ENCODE measurements at regions of chr10 and their contacts with region 1.

Region 1: GRCh38 chr10:34994565-34995142 is 95.5 kb downstream of the CUL2 start:
- DNase-seq: peak; percentile 61
- H3K4me3 Mint-ChIP-seq: no peak overlapping the region
- H3K27ac Mint-ChIP-seq: peak overlapping the region; percentile 73
- H3K4me1 Mint-ChIP-seq: peaks cover 21% of the 10 kb centered on the region
- H3K27me3 Mint-ChIP-seq: no peaks in the 10 kb centered on the region

Region 2: DNA sequence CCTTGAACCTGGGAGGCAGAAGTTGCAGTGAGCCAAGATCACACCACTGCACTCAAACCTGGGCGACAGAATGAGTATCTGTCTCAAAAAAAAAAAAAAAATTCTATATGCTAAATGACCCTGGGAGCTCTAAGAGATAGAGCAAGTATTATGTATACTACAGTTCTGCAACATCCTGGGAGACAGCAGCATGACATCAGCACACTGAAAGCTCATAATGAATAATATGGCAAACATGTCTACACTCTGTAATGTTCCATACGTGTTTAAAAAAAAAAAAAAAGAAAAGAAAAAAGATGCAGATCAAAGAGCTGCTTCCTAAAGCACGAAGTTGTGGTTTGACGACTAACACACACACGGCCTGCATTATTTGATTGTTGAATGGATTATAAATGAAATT is 23.0 kb after region 1 on chr10:
- intact Hi-C with region 1: loop called (anchors 1 kb)
- DNase-seq: no peak
- H3K4me3 Mint-ChIP-seq: no peak overlapping the region
- H3K27ac Mint-ChIP-seq: peak overlapping the region; percentile 1
- H3K4me1 Mint-ChIP-seq: peaks cover 9% of the 10 kb centered on the region
- H3K27me3 Mint-ChIP-seq: no peaks in the 10 kb centered on the region

Region 3: GRCh38 chr10:35027567-35027966 is 32.9 kb after region 1 on chr10:
- intact Hi-C with region 1: loop called (anchors 1 kb)
- DNase-seq: no peak
- H3K4me3 Mint-ChIP-seq: no peak overlapping the region
- H3K27ac Mint-ChIP-seq: no peak overlapping the region
- H3K4me1 Mint-ChIP-seq: no peaks in the 10 kb centered on the region
- H3K27me3 Mint-ChIP-seq: no peaks in the 10 kb centered on the region

Region 4: GRCh38 chr10:35090162-35090954 is 95.7 kb after region 1 on chr10 and contains the start of gene CUL2:
- intact Hi-C with region 1: loop called (anchors 1 kb)
- DNase-seq: peak; percentile 90
- H3K4me3 Mint-ChIP-seq: peak within 1 kb of the TSS; percentile 98
- H3K27ac Mint-ChIP-seq: peak within 1 kb of the TSS; percentile 99
- H3K4me1 Mint-ChIP-seq: peaks cover 38% of the 10 kb centered on the region
- H3K27me3 Mint-ChIP-seq: peaks cover 9% of the 10 kb centered on the region
- total RNA-seq, gene CUL2: 49.8 and 50.5 TPM in 2 replicates

Region 5: GRCh38 chr10:35218339-35218955 is 223.8 kb after region 1 on chr10:
- intact Hi-C with region 1: loop called (anchors 1 kb)
- DNase-seq: peak; percentile 73
- H3K4me3 Mint-ChIP-seq: peak overlapping the region; percentile 74
- H3K27ac Mint-ChIP-seq: peak overlapping the region; percentile 95
- H3K4me1 Mint-ChIP-seq: peaks cover 61% of the 10 kb centered on the region
- H3K27me3 Mint-ChIP-seq: no peaks in the 10 kb centered on the region

Region 6: DNA sequence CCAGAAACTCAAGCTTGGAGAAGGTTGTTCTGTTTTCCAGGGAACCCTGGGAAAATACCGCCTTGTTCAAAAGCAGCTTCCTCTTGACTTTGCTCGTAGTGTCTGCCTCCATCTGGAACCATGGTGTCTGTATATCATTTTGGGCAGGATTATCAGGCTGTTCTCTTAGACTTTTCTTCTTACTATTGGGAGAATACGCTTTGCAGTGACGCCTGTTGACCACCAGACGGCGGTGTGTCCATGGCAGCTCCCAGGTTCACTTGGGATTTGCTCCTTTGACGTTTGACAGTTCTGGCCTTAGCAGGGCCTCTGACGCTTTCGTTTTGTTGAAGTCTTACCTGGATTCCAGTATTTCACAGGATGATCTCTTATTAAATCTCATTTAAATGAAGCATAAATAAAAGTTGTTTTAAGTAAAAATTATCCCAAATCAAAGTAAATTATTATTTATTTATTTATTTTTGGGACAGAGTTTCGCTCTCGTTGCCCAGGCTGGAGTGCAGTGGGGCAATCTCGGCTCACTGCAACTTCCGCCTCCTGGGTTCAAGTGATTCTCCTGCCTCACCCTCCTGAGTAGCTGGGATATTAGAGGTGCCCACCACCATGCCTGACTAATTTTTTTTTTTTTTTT is 568.7 kb after region 1 on chr10:
- intact Hi-C with region 1: loop called (anchors 10 kb)
- DNase-seq: peak; percentile 11
- H3K4me3 Mint-ChIP-seq: no peak overlapping the region
- H3K27ac Mint-ChIP-seq: peak overlapping the region; percentile 55
- H3K4me1 Mint-ChIP-seq: no peaks in the 10 kb centered on the region
- H3K27me3 Mint-ChIP-seq: no peaks in the 10 kb centered on the region

Region 7: GRCh38 chr10:35642027-35642792 is 647.6 kb after region 1 on chr10 and contains the start of gene FZD8:
- intact Hi-C with region 1: loop called (anchors 1 kb)
- DNase-seq: peak; percentile 54
- H3K4me3 Mint-ChIP-seq: peak within 1 kb of the TSS; percentile 83
- H3K27ac Mint-ChIP-seq: no peak within 1 kb of the TSS
- H3K4me1 Mint-ChIP-seq: peaks cover 14% of the 10 kb centered on the region
- H3K27me3 Mint-ChIP-seq: peaks cover 67% of the 10 kb centered on the region
- total RNA-seq, gene FZD8: 0.41 and 0.56 TPM in 2 replicates